Naive thymus-derived CD4-positive, alpha-beta T cell (primary cell): ENCODE measurements at regions of chr1 and their contacts with region 1.

Region 1: GRCh38 chr1:183471743-183472487 is 384 bp upstream of the SMG7 start:
- DNase-seq: peak; percentile 90 to 99 (median 96)
- ATAC-seq: peak; percentile 82
- H3K4me3 ChIP-seq: peak overlapping the region; percentile 74
- H3K4me3 Mint-ChIP-seq: peak overlapping the region; percentile 94 to 100 (median 98)
- H3K27ac ChIP-seq: peak overlapping the region; percentile 90
- H3K27ac Mint-ChIP-seq: peak overlapping the region in 8 of 9 donors; percentile 97 to 100 (median 99)
- H3K4me1 ChIP-seq: peaks cover 17 to 34% of the 10 kb centered on the region in 2 donors
- H3K4me1 Mint-ChIP-seq: peaks cover 3 to 32% (median 14%) of the 10 kb centered on the region in 7 donors
- H3K27me3 ChIP-seq: no peaks in the 10 kb centered on the region
- H3K27me3 Mint-ChIP-seq: peaks cover 0 to 7% (median 0%) of the 10 kb centered on the region in 5 donors

Region 2: DNA sequence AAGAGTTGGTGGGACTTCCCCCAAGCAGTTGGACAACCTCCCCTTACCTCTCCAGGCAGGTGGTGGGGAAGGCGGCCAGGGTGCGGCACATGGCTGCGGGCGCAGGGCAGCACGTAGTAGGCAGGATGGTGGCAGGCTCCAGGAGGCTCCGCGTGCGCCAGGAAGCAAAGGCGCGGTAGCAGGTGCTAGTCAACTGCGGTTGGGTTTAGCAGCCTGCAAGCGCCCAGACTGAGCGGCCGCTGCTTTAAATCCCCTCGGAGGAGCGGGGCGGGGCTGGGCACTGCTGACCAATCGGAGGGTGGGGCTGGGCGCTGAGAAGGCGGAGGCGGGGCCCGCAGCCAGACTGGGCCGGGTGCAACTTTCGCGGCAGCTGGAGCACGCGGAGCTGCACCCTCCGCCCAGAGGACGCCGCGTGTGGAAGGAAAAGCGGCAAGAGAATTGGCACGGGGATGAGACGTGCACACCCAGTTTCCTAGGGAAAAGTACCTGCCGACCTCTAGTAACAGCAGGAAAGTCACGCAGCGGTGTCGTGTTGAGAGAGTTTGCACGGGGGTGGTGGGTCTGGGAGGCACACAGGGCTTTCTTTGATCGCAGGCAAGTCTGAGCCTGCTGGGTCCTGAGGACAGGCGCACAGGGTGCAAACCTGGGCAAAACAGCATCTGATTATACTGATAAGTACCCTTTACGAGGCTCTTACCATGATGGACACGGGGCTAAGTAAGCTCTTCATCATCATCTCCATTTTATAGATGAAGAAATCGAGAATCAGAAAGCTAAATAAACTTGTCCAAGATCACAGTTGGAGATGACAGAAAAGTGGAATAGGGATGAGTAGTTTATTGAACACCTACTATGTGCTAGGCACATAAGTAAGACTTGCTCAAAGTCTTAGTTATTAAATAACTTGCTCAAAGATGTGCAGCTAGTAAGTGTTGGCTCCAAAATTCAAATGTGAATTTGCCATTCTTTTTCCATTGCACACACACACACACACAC is 867.4 kb before region 1 on chr1 and contains the start of gene RGS16:
- CTCF ChIA-PET with region 1: no interaction called
- POLR2A ChIA-PET with region 1: no interaction called
- intact Hi-C with region 1: loop called in 1 of 2 experiments (anchors 5 kb)
- DNase-seq: peak; percentile 69 to 95 (median 76)
- ATAC-seq: peak; percentile 93
- H3K4me3 ChIP-seq: peak within 1 kb of the TSS; percentile 59
- H3K4me3 Mint-ChIP-seq: peak within 1 kb of the TSS in 8 of 10 donors; percentile 6 to 87 (median 82)
- H3K27ac ChIP-seq: peak within 1 kb of the TSS; percentile 37
- H3K27ac Mint-ChIP-seq: peak within 1 kb of the TSS in 6 of 9 donors; percentile 13 to 84 (median 71)
- H3K4me1 ChIP-seq: peaks cover 13 to 26% of the 10 kb centered on the region in 2 donors
- H3K4me1 Mint-ChIP-seq: peaks cover 4 to 37% (median 18%) of the 10 kb centered on the region in 7 donors
- H3K27me3 ChIP-seq: no peaks in the 10 kb centered on the region
- H3K27me3 Mint-ChIP-seq: peaks cover 0 to 12% (median 7%) of the 10 kb centered on the region in 5 donors
- total RNA-seq, gene RGS16: 0.49 to 17.5 (median 3.4) TPM

Region 3: DNA sequence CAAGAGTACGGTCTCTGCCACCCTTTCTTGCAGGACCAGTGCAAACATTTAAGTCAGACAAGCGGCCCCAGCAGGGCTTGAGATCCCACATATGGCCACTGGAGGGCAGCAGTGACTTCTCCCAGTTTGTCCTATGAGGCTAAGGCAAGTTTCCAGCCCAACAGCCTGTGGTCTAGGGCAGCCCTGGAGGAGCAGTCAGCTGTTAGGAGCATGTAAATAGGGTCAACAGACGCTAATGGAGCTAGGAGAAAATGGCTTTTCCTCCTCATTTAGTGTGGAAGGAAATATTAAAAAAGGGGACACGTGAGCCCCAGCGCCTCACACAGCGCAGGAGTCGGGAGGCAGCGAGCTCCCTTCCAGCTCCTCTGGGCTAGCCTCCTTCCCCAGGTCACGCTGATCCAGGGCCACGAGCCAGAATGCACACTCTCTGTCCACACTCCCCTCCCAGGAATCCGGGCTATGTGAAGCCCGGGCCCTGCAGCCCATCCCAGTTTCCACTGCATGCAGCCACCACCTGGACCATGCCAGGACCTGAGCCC is 190.3 kb before region 1 on chr1:
- CTCF ChIA-PET with region 1: no interaction called
- POLR2A ChIA-PET with region 1: no interaction called
- intact Hi-C with region 1: loop called (anchors 1 kb)
- DNase-seq: peak; percentile 42 to 69 (median 49)
- ATAC-seq: peak; percentile 73
- H3K4me3 ChIP-seq: no peak overlapping the region
- H3K4me3 Mint-ChIP-seq: no peak overlapping the region
- H3K27ac ChIP-seq: no peak overlapping the region
- H3K27ac Mint-ChIP-seq: peak overlapping the region in 1 of 9 donors; percentile 60
- H3K4me1 ChIP-seq: no peaks in the 10 kb centered on the region
- H3K4me1 Mint-ChIP-seq: peaks cover 0 to 14% (median 3%) of the 10 kb centered on the region in 7 donors
- H3K27me3 ChIP-seq: no peaks in the 10 kb centered on the region
- H3K27me3 Mint-ChIP-seq: peaks cover 0 to 10% (median 5%) of the 10 kb centered on the region in 5 donors

Region 4: DNA sequence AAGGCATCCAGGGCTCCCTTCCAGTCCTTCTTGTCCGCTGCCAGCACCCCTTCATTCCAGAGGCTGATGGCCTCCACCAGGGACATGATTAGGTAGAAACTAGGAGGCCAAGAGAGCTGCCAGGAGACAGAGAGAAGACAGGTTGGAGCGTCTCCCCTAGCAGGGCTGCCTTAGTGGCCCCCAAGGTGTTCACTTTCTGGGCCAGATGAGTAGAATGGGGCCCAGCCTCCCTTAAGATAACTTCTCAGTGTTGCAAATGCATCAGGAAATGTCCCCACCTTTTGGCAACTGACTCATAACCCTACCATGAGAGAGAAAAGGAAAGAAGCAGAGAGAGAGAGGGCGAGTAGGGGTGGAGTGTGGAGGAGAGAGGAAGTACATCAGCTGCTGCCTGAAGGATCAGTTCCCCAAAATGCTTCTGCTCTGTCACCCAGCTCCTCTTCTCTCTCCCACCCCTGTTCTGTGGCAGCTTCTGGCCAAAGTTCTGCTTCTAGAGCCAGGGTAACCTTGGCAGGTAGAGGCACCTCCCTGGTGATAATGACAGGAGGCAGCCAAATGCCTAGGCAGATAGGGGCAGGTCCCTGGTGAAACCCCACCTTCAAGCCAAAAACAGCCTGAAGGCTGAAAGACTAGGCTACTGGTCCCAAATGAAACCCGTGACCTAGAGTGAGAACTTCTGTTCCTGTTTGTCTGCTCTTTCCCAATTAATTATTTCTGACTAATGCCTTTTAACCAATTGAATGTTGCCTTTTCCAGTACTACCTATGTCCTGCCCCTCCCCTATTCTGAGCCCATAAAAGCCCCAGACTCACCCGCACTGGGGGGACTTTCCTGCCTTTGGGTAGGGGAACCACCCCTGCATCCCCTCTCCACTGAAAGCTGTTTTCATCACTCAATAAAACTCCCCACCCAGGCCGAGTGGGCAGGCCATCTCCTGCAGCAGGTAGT is 118.6 kb after region 1 on chr1 and contains the start of gene NCF2:
- CTCF ChIA-PET with region 1: no interaction called
- POLR2A ChIA-PET with region 1: no interaction called
- intact Hi-C with region 1: loop called in 1 of 2 experiments (anchors 1 kb)
- DNase-seq: peak in 1 of 9 donors; percentile 46
- ATAC-seq: peak; percentile 90
- H3K4me3 ChIP-seq: no peak within 1 kb of the TSS
- H3K4me3 Mint-ChIP-seq: peak within 1 kb of the TSS in 5 of 10 donors; percentile 20 to 81 (median 25)
- H3K27ac ChIP-seq: no peak within 1 kb of the TSS
- H3K27ac Mint-ChIP-seq: peak within 1 kb of the TSS in 4 of 9 donors; percentile 36 to 87 (median 64)
- H3K4me1 ChIP-seq: peaks cover 3 to 9% of the 10 kb centered on the region in 2 donors
- H3K4me1 Mint-ChIP-seq: peaks cover 0 to 44% (median 19%) of the 10 kb centered on the region in 7 donors
- H3K27me3 ChIP-seq: no peaks in the 10 kb centered on the region
- H3K27me3 Mint-ChIP-seq: peaks cover 0 to 5% (median 0%) of the 10 kb centered on the region in 5 donors
- total RNA-seq, gene NCF2: 2.2 to 145 (median 15.2) TPM

Region 5: DNA sequence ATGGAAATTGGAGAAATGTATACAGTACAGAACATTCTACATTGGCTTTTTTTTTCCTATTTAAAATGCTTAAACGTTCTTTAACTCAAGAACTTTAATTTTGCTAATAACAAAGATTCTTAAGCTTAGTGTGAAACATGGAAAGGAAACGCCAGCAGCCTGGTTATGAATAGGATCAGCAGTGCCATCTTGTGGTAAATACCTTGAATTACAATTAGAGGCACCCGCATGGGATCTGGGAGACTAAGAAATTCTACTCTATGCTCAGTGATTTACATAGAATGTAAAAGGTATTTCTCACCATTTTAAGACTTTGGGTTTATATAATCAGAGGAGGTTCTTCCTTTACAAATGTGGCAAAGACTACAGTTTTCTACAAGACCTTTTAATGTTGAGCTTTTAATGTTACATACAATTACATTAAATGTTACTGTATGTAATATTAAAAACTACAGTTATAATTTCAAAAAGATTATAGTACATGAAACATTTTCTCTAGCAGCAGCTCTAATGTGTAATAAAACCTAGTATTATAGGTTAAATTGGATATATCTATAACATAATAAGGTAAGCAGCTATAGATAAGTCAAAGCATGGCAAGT is 213.3 kb after region 1 on chr1:
- CTCF ChIA-PET with region 1: interaction called, 4 read pairs
- POLR2A ChIA-PET with region 1: no interaction called
- intact Hi-C with region 1: loop called (anchors 1 to 5 kb)
- DNase-seq: peak in 7 of 9 donors; percentile 20 to 63 (median 54)
- ATAC-seq: peak; percentile 86
- H3K4me3 ChIP-seq: no peak overlapping the region
- H3K4me3 Mint-ChIP-seq: no peak overlapping the region
- H3K27ac ChIP-seq: no peak overlapping the region
- H3K27ac Mint-ChIP-seq: no peak overlapping the region
- H3K4me1 ChIP-seq: no peaks in the 10 kb centered on the region
- H3K4me1 Mint-ChIP-seq: peaks cover 0 to 4% (median 0%) of the 10 kb centered on the region in 7 donors
- H3K27me3 ChIP-seq: no peaks in the 10 kb centered on the region
- H3K27me3 Mint-ChIP-seq: peaks cover 0 to 30% (median 0%) of the 10 kb centered on the region in 5 donors

Region 6: DNA sequence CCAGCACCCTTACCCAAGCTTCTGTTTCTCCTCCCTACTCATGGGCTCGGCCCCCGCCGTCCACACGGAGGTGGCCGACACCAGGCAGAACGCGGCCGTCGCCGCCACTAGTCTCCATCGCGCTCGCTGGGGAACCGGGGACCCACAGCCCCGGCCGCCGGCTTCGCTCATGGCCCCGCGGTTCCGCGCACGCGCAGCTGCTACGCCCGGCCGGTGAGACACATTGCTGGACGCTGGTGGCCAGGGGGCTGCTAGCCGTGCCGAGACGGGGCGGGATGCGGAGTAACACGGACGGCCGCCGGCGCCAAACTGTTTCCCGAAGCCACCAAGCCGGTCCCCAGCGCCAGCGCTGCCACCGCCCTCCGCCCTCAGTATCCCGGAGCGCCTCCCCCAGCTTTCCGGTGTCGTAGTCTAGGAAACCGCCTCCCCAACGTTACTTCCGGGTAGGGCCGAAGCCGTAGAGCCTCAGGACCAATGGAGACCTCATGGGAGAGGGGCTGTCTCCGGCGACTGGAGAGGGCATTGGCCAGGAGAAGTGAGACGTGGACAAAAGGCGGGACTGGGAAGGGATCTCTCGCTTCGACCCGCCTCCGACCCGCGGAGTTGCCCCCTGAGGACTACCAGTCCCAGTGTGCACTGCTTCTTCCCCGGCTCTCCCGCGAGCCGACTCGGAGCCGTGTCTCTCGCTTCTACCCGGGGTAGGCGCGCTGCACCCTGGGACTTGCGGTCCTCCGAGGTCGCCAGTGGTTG is 1282.7 kb after region 1 on chr1 and contains the start of gene EDEM3:
- CTCF ChIA-PET with region 1: no interaction called
- POLR2A ChIA-PET with region 1: no interaction called
- intact Hi-C with region 1: loop called (anchors 1 to 2 kb)
- DNase-seq: peak; percentile 86 to 100 (median 99)
- ATAC-seq: peak; percentile 96
- H3K4me3 ChIP-seq: peak within 1 kb of the TSS; percentile 84
- H3K4me3 Mint-ChIP-seq: peak within 1 kb of the TSS; percentile 87 to 96 (median 94)
- H3K27ac ChIP-seq: peak within 1 kb of the TSS; percentile 91
- H3K27ac Mint-ChIP-seq: peak within 1 kb of the TSS; percentile 71 to 97 (median 93)
- H3K4me1 ChIP-seq: peaks cover 9 to 13% of the 10 kb centered on the region in 2 donors
- H3K4me1 Mint-ChIP-seq: peaks cover 21 to 50% (median 46%) of the 10 kb centered on the region in 7 donors
- H3K27me3 ChIP-seq: no peaks in the 10 kb centered on the region
- H3K27me3 Mint-ChIP-seq: peaks cover 0 to 13% (median 0%) of the 10 kb centered on the region in 5 donors
- total RNA-seq, gene EDEM3: 21.0 to 55.9 (median 33.9) TPM